GM18951 (cell line): ENCODE measurements at regions of chr15 and their contacts with region 1.

Region 1: GRCh38 chr15:50686468-50687301 is at the start of gene TRPM7:
- POLR2A ChIP-seq: peak; percentile 96

Region 2: GRCh38 chr15:50893976-50894375 is 207.3 kb after region 1 on chr15:
- in situ Hi-C with region 1: no loop called
- POLR2A ChIP-seq: no peak

Region 3: GRCh38 chr15:50908210-50909009 is 221.7 kb after region 1 on chr15 and contains the start of gene AP4E1:
- in situ Hi-C with region 1: loop called (anchors 10 kb)
- POLR2A ChIP-seq: peak; percentile 80